H1 (cell line): ENCODE measurements at regions of chr2 and their contacts with region 1.

Region 1: GRCh38 chr2:120958623-120959366 is 223.1 kb downstream of the GLI2 start:
- DNase-seq: peak; percentile 17 to 93
- H3K4me3 ChIP-seq: no peak overlapping the region
- H3K27ac ChIP-seq: no peak overlapping the region
- H3K4me1 ChIP-seq: no peaks in the 10 kb centered on the region
- H3K27me3 ChIP-seq: no peaks in the 10 kb centered on the region
- CTCF ChIP-seq: peak in 2 of 3 experiments; percentile 79 to 83; a peak in 3 of 4 replicates
- EP300 ChIP-seq: no peak
- POLR2A ChIP-seq: no peak
- RAD21 ChIP-seq: peak; percentile 78 to 86

Region 2: GRCh38 chr2:120833127-120833675 is 125.6 kb before region 1 on chr2:
- CTCF ChIA-PET with region 1: interaction called, 15 read pairs
- POLR2A ChIA-PET with region 1: no interaction called
- DNase-seq: no peak
- H3K4me3 ChIP-seq: no peak overlapping the region
- H3K27ac ChIP-seq: no peak overlapping the region
- H3K4me1 ChIP-seq: peaks cover 2 to 16% (median 8%) of the 10 kb centered on the region in 4 experiments; a peak in 6 of 7 replicates
- H3K27me3 ChIP-seq: no peaks in the 10 kb centered on the region
- CTCF ChIP-seq: peak in 2 of 3 experiments; percentile 42; a peak in 3 of 4 replicates
- EP300 ChIP-seq: no peak
- POLR2A ChIP-seq: no peak
- RAD21 ChIP-seq: peak; percentile 53 to 67; a peak in 3 of 4 replicates

Region 3: DNA sequence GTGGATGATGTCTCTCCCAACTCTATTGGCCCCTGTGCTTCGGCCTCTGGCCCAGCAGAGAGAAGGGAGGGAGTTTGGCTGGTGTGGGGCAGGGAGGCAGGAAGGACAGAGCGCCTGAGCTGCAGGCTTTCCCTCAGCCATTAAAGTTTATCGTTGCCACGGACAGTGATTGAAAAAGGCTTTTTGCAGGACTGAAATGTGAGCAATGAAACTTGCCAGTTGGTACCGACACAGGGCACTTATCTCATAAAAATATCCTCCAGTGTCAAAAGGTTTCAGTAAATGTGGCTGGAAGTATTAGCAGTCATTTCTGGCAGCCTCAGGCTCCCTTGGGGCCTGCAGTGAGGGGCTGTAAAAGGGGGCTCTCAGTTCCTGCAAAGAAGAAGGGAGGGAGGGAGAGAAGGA is 54.0 kb before region 1 on chr2:
- CTCF ChIA-PET with region 1: interaction called, 16 read pairs
- POLR2A ChIA-PET with region 1: no interaction called
- DNase-seq: no peak
- H3K4me3 ChIP-seq: no peak overlapping the region
- H3K27ac ChIP-seq: no peak overlapping the region
- H3K4me1 ChIP-seq: peaks cover 0 to 17% (median 10%) of the 10 kb centered on the region in 4 experiments
- H3K27me3 ChIP-seq: no peaks in the 10 kb centered on the region
- CTCF ChIP-seq: no peak
- EP300 ChIP-seq: no peak
- POLR2A ChIP-seq: no peak
- RAD21 ChIP-seq: no peak

Region 4: GRCh38 chr2:120943403-120944034 is 15.3 kb before region 1 on chr2:
- CTCF ChIA-PET with region 1: interaction called, 58 read pairs
- POLR2A ChIA-PET with region 1: interaction called, 3 read pairs
- DNase-seq: no peak
- H3K4me3 ChIP-seq: no peak overlapping the region
- H3K27ac ChIP-seq: no peak overlapping the region
- H3K4me1 ChIP-seq: peaks cover 0 to 3% (median 0%) of the 10 kb centered on the region in 4 experiments; a peak in 1 of 7 replicates
- H3K27me3 ChIP-seq: no peaks in the 10 kb centered on the region
- CTCF ChIP-seq: no peak
- EP300 ChIP-seq: no peak
- POLR2A ChIP-seq: no peak
- RAD21 ChIP-seq: no peak

Region 5: GRCh38 chr2:121004950-121005349 is 46.2 kb after region 1 on chr2:
- CTCF ChIA-PET with region 1: interaction called, 13 read pairs
- POLR2A ChIA-PET with region 1: no interaction called
- DNase-seq: no peak
- H3K4me3 ChIP-seq: no peak overlapping the region
- H3K27ac ChIP-seq: no peak overlapping the region
- H3K4me1 ChIP-seq: peaks cover 3 to 9% (median 7%) of the 10 kb centered on the region in 4 experiments
- H3K27me3 ChIP-seq: peaks cover 0 to 13% (median 3%) of the 10 kb centered on the region in 4 experiments; a peak in 4 of 7 replicates
- CTCF ChIP-seq: no peak
- EP300 ChIP-seq: no peak
- POLR2A ChIP-seq: no peak
- RAD21 ChIP-seq: no peak

Region 6: GRCh38 chr2:121030523-121030922 is 71.7 kb after region 1 on chr2:
- CTCF ChIA-PET with region 1: no interaction called
- POLR2A ChIA-PET with region 1: no interaction called
- DNase-seq: no peak
- H3K4me3 ChIP-seq: no peak overlapping the region
- H3K27ac ChIP-seq: no peak overlapping the region
- H3K4me1 ChIP-seq: no peaks in the 10 kb centered on the region
- H3K27me3 ChIP-seq: peaks cover 0 to 28% (median 15%) of the 10 kb centered on the region in 4 experiments; a peak in 6 of 7 replicates
- CTCF ChIP-seq: no peak
- EP300 ChIP-seq: no peak
- POLR2A ChIP-seq: no peak
- RAD21 ChIP-seq: no peak

Region 7: DNA sequence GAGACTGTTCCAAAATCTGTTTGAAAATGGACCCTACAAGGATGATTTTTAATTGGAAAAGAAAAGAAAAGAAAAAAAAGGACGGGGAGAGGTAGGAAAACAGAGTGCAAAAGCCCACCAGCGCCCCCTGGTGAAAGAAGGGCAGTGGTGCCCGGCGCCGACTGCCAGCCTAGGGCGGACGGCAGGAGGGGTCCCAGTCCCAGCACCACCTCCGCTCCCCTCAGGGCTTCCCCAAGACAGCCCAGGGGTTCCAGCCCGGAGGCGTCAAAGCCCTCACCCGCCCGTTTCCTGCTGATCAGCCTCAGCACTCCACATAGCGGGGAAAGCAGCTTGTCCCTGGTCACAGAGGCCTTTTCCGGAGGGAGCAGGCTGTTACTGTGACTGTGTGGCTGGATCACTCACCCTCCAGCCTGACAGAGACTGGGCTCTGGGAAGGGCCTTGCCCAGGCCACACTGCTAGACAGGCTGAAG is 112.3 kb after region 1 on chr2:
- CTCF ChIA-PET with region 1: interaction called, 14 read pairs
- POLR2A ChIA-PET with region 1: interaction called, 11 read pairs
- DNase-seq: peak in 1 of 2 experiments; percentile 98
- H3K4me3 ChIP-seq: no peak overlapping the region
- H3K27ac ChIP-seq: no peak overlapping the region
- H3K4me1 ChIP-seq: peaks cover 0 to 15% (median 13%) of the 10 kb centered on the region in 4 experiments; a peak in 6 of 7 replicates
- H3K27me3 ChIP-seq: peaks cover 0 to 7% (median 6%) of the 10 kb centered on the region in 4 experiments; a peak in 6 of 7 replicates
- CTCF ChIP-seq: peak in 2 of 3 experiments; percentile 78 to 84; a peak in 3 of 4 replicates
- EP300 ChIP-seq: no peak
- POLR2A ChIP-seq: no peak
- RAD21 ChIP-seq: peak; percentile 88 to 93